ENCODE measurements at regions of chr1 and their contacts with region 1.

Region 1: DNA sequence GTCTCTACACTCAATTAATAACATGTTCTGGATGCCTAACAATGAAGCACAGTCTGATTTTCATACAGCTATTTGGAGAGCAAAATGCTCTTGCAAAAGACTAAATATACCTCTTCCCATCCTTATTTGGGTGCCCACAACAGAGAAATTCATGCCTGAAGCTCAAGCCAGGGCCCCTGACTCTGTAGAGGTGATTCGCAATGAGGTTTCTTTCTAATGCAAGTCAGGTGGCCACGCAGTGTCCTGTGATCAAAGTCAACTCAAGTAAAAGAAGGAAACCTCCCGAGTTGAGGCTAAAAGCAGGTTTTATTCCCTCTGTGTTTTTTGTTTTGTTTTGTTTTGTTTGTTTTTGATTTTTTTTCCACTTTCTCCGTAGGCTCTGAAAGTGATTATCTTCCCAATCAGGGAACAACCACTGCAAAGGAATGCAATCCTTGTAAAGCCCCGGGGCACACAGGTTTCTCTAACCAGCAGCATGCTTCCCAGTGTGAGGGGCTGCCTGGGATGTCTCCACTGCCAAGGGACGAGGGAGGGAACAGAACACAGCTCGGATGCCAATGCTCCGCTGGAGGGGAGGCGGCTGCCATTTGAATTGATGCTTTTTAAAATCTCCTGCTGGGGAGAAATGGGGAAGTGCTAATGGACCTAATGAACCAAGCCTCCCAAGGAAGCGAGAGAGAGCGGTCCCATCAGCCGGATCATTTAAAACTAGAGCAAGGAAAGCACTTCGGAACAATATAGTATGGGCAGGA is 73.8 kb upstream of the SSX2IP start:
- ATAC-seq: no peak
- H3K4me3 ChIP-seq: no peak overlapping the region
- H3K27ac ChIP-seq: no peak overlapping the region
- H3K4me1 ChIP-seq: peaks cover 8 to 11% of the 10 kb centered on the region in 2 donors

Region 2: GRCh38 chr1:84442256-84442655 is 321.8 kb before region 1 on chr1:
- in situ Hi-C with region 1: loop called in 2 of 9 experiments (anchors 10 to 25 kb)
- ATAC-seq: peak in 4 of 8 experiments; percentile 38 to 97 (median 86)
- H3K4me3 ChIP-seq: no peak overlapping the region
- H3K27ac ChIP-seq: no peak overlapping the region
- H3K4me1 ChIP-seq: peaks cover 0 to under 1% of the 10 kb centered on the region in 2 donors

Measured in motor neuron (in vitro differentiated cells).